ENCODE measurements at regions of chr16 and their contacts with region 1.

Region 1: DNA sequence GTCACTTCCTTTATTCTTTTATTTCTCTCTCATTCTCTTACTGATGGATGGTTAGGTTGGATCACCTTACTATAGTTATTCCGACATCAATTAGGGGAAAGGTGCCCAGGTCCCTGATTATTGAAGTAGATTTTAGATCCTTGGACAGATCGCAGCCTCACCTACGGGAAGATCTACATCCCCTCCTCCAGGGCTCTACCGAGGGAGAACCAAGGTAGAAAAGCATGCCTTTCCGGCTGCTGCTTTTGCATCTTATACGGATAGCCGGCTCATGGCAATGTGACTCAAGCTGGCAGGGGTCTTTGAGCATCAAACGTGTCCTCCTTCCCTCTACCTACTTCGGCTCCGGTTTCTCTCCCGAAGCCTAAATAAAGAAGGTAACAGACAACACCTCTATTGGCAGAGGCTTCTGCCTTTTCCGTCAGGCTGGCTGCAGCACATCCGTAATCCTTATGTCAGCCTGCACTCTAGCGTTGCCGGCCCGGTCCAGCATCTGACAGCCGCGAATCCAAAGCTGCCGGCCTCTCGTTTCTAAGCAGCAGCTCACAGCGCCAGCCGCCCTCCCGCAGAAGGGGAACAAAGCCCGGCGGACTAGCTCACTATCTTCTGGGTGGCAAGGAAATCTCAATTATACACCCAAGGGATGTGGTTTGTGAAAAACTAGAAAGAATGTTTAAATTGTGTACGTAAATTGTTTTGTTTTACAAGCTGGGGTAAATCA is 46.9 kb downstream of the IRX6 start:
- DNase-seq: peak; percentile 82 to 85
- ATAC-seq: peak; percentile 87
- H3K4me3 ChIP-seq: no peak overlapping the region
- H3K27ac ChIP-seq: no peak overlapping the region
- H3K4me1 ChIP-seq: peaks cover 3 to 7% of the 10 kb centered on the region in 2 donors
- H3K27me3 ChIP-seq: no peaks in the 10 kb centered on the region

Region 2: GRCh38 chr16:54633943-54634362 is 737.0 kb before region 1 on chr16:
- intact Hi-C with region 1: loop called (anchors 2 to 10 kb)
- DNase-seq: peak; percentile 68 to 79
- ATAC-seq: peak; percentile 85
- H3K4me3 ChIP-seq: no peak overlapping the region
- H3K27ac ChIP-seq: peak overlapping the region in 1 of 2 donors; percentile 17
- H3K4me1 ChIP-seq: peaks cover 0 to 3% of the 10 kb centered on the region in 2 donors
- H3K27me3 ChIP-seq: no peaks in the 10 kb centered on the region

Region 3: DNA sequence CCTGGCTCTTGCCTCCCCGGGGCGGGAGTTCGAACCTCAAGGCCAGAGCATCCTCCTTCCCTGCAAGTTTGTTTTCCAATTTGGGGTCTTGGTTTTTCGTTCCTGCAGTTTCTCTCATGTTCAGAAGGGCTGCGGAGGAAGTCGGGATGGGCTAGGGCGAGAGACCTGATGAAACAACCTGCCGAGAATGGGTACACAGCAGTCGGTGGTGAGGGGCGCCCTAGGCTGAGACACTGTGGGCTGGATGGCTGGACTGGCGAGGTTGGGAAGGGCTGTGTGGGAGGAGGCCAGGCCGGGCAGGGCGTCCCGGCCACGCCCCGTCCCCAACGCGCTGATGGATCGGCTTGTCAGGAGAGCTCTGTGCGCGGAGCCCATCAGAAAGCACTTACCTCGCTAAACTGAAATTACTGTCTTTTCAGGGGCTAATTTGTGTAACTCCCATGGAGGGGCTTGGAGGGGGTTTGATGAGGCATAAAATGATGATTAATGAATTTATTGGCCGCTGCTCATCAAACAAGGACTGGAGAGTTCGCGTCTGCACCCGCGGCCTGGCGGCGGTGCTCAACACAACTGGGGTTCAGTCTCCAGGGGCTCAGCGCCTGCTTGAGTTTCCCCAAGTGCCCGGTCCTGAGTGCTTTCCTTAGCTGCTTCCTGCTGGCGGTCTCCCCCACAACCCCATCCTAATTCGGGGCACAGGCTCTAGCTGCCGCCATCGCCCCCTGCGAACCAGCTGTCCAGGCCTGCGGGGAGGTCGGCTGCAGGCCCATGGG is 431.2 kb before region 1 on chr16:
- intact Hi-C with region 1: loop called (anchors 10 kb)
- DNase-seq: no peak
- ATAC-seq: peak; percentile 21
- H3K4me3 ChIP-seq: no peak overlapping the region
- H3K27ac ChIP-seq: no peak overlapping the region
- H3K4me1 ChIP-seq: no peaks in the 10 kb centered on the region
- H3K27me3 ChIP-seq: no peaks in the 10 kb centered on the region

Measured in aorta (tissue), 5 donors.